Sigmoid colon (tissue), 7 donors: ENCODE measurements at regions of chr6 and their contacts with region 1.

Region 1: GRCh38 chr6:13094781-13095425 is 233.4 kb downstream of the TBC1D7 start:
- DNase-seq: no peak
- H3K4me3 ChIP-seq: no peak overlapping the region
- H3K27ac ChIP-seq: no peak overlapping the region
- H3K4me1 ChIP-seq: peaks cover 0 to 15% (median 7%) of the 10 kb centered on the region in 4 donors
- H3K27me3 ChIP-seq: no peaks in the 10 kb centered on the region
- CTCF ChIP-seq: no peak
- EP300 ChIP-seq: no peak
- POLR2A ChIP-seq: no peak

Region 2: GRCh38 chr6:12324514-12325147 is 770.3 kb before region 1 on chr6:
- intact Hi-C with region 1: no loop called
- DNase-seq: no peak
- H3K4me3 ChIP-seq: no peak overlapping the region
- H3K27ac ChIP-seq: no peak overlapping the region
- H3K4me1 ChIP-seq: no peaks in the 10 kb centered on the region
- H3K27me3 ChIP-seq: no peaks in the 10 kb centered on the region
- CTCF ChIP-seq: no peak
- EP300 ChIP-seq: no peak
- POLR2A ChIP-seq: no peak

Region 3: DNA sequence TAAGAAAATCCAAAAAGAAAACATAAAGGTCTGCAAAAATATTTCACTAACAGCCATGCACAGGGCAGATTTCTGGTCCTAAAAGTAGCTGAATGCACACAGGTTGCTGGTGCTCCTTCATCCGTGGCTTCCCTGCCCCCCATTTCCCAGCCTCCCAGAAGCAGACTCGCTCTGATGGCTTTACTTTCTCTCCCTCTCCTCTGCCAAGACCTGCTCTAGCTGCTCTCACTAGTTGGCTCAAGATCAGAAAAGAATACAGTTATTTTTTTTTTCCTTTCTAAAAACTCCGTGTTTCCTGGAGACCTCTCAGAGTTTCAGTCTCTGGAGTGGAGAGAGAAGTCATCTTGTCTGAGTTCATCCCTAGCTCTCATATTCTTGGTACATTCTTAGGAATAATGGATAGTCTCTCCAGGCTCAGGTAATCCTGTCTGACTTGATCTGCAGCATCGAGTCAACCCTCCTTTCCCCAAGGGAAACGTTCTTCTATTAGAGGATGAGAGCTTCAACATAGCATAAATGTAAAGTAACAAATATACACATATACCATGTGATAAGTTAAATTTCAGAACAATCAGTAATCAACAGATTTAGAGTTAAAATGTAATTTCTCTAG is 19.2 kb after region 1 on chr6:
- intact Hi-C with region 1: loop called (anchors 2 kb)
- DNase-seq: no peak
- H3K4me3 ChIP-seq: no peak overlapping the region
- H3K27ac ChIP-seq: no peak overlapping the region
- H3K4me1 ChIP-seq: peaks cover 0 to 14% (median 13%) of the 10 kb centered on the region in 4 donors
- H3K27me3 ChIP-seq: no peaks in the 10 kb centered on the region
- CTCF ChIP-seq: no peak
- EP300 ChIP-seq: no peak
- POLR2A ChIP-seq: no peak

Region 4: DNA sequence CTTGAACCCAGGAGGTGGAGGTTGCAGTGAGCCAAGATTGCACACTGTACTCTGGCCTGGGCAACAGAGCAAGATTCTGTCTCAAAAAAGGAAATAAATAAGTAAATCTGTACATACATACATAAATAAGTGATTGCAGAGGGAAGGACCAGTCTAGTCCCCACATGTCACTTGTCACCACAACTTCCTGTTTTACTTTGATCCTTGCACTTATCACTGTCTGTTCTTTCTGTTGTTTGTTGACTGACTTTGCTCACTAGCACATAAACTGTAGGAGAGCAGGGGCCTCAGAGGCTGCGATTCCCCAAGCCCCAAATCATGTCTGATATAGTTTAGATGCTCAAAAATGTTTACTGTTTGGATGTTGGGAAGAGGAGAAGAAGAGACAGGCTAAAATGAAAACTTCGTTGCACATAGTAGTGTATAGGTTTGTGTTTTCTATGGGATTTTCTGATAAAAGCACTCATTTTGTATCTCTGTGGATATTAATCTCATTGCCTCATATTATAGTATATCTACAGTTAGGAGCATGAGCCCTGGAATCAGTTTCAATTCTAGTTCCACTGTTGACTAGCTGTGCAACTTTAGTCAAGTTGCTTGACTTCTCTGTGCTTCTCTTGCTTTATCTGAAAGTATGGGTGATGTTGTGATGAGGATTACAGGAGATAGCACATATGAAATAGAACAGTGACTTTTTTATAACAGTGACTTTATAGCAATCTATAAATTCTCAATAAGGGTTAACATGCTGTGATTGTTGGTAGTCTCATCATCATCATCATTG is 68.5 kb after region 1 on chr6:
- intact Hi-C with region 1: no loop called
- DNase-seq: no peak
- H3K4me3 ChIP-seq: no peak overlapping the region
- H3K27ac ChIP-seq: no peak overlapping the region
- H3K4me1 ChIP-seq: no peaks in the 10 kb centered on the region
- H3K27me3 ChIP-seq: no peaks in the 10 kb centered on the region
- CTCF ChIP-seq: no peak
- EP300 ChIP-seq: no peak
- POLR2A ChIP-seq: no peak